ENCODE measurements at regions of chr1 and their contacts with region 1.

Region 1: DNA sequence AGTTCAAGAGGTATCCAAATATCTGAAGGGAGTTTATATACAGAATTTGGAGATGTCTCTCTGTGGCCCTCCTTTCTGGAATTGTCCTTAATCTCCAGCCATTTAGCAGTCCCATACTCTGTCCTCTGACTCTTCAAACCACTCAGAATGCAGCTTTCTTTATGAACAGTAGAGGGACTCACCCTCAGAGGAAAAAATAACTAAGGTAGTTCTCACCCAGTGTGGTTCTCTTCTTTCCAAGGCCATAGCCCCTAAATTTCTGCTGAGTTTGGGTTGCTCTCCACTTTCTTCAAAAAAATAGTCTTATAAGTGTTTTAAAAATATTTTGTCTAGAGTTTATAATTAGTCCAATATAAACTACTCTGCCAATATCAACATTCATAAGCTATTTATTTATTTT is 369.7 kb downstream of the MATN1 start:
- DNase-seq: no peak
- H3K4me3 ChIP-seq: no peak overlapping the region
- H3K27ac ChIP-seq: no peak overlapping the region
- H3K4me1 ChIP-seq: no peaks in the 10 kb centered on the region
- H3K27me3 ChIP-seq: no peaks in the 10 kb centered on the region
- CTCF ChIP-seq: peak; percentile 26 to 68

Region 2: DNA sequence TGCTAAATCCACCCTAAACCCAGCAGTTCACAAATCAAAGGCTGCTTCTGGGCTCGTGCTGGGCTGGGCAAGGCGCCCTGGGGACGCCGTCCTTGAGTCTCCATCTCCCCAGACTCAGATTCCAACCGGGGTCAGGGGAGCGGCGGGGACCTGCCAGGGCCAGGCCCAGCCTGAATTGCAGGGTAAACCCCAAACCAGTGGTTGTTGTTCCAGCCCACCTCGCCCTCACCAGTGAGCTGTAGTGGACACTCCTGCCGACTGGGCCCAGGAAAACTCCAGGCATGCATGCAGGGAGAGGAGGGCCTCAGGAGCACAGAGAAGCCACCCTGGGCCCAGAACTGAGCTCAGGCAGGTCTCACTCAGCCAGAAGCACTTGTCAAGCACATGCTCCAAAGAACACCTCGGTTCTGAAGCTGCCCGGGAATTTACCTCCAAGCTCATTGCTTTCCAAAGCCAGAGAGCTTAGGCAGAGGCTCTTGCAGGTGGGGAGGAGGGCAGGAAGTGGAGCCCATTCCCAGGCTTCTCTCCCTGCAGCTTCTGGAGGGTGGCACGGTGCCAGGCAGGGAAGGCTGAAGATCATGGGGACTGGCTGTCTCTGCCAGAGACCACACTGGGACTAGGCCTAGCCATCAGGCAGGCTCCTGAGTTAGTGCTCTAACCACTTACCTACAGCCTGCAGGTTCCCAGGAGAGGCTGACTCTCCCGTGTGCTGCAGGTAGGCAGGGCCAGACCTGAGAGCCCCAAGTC is 67.2 kb before region 1 on chr1:
- CTCF ChIA-PET with region 1: no interaction called
- dilution Hi-C with region 1: loop called (anchors 5 kb)
- in situ Hi-C with region 1: no loop called
- intact Hi-C with region 1: no loop called
- DNase-seq: no peak
- H3K4me3 ChIP-seq: no peak overlapping the region
- H3K27ac ChIP-seq: no peak overlapping the region
- H3K4me1 ChIP-seq: no peaks in the 10 kb centered on the region
- H3K27me3 ChIP-seq: no peaks in the 10 kb centered on the region
- CTCF ChIP-seq: no peak

Region 3: GRCh38 chr1:30379684-30380624 is 26.3 kb after region 1 on chr1:
- CTCF ChIA-PET with region 1: interaction called, 14 read pairs
- dilution Hi-C with region 1: no loop called
- in situ Hi-C with region 1: no loop called
- intact Hi-C with region 1: loop called (anchors 1 kb)
- DNase-seq: peak; percentile 68
- H3K4me3 ChIP-seq: no peak overlapping the region
- H3K27ac ChIP-seq: no peak overlapping the region
- H3K4me1 ChIP-seq: peaks cover 23% of the 10 kb centered on the region
- H3K27me3 ChIP-seq: no peaks in the 10 kb centered on the region
- CTCF ChIP-seq: peak; percentile 89 to 93

Region 4: DNA sequence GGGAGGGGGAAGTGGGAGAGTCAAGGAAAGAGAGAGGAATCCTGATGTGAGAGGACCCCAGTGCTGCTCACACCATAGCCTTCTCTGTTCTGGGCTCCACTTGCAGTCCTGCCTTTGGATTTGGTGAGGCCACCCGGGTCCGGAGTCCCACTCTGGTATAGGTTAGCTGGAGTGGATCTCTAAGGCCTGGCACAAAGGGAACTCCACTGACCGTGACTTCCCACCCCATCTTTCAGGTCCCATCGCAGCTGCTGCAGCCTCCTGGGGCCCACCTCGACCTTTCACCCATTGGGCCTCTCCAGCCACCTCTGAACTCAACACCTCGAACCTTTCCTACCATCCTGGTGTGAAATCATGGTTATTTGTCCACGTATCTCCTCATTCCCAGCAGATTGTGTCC is 45.4 kb after region 1 on chr1:
- CTCF ChIA-PET with region 1: no interaction called
- dilution Hi-C with region 1: loop called (anchors 5 kb)
- in situ Hi-C with region 1: no loop called
- intact Hi-C with region 1: no loop called
- DNase-seq: no peak
- H3K4me3 ChIP-seq: no peak overlapping the region
- H3K27ac ChIP-seq: no peak overlapping the region
- H3K4me1 ChIP-seq: no peaks in the 10 kb centered on the region
- H3K27me3 ChIP-seq: no peaks in the 10 kb centered on the region
- CTCF ChIP-seq: no peak

Region 5: GRCh38 chr1:30420519-30421050 is 66.9 kb after region 1 on chr1:
- CTCF ChIA-PET with region 1: no interaction called
- dilution Hi-C with region 1: no loop called
- in situ Hi-C with region 1: no loop called
- intact Hi-C with region 1: no loop called
- DNase-seq: peak; percentile 44
- H3K4me3 ChIP-seq: no peak overlapping the region
- H3K27ac ChIP-seq: no peak overlapping the region
- H3K4me1 ChIP-seq: peaks cover 9% of the 10 kb centered on the region
- H3K27me3 ChIP-seq: no peaks in the 10 kb centered on the region
- CTCF ChIP-seq: no peak

Region 6: DNA sequence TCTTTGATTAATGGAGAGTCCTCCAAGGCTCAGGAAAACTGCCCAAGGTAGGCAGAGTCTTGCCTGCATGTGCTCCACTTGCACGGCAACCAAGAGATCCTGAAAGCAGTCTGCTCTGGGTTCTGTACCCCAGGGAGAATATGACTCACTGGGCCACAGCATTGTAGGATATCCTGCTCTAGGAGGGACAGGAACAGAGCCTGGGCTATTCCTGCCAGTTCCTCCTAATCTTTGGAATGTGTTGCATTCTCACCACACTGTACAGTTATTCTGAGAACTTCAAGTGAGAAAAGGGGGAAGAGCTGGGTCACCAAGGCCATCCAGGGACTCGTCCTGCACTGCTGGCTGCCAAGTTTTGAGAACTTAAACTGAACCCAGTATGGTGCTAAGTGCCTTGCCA is 91.2 kb after region 1 on chr1:
- CTCF ChIA-PET with region 1: no interaction called
- dilution Hi-C with region 1: loop called (anchors 5 kb)
- in situ Hi-C with region 1: no loop called
- intact Hi-C with region 1: no loop called
- DNase-seq: peak; percentile 19
- H3K4me3 ChIP-seq: no peak overlapping the region
- H3K27ac ChIP-seq: no peak overlapping the region
- H3K4me1 ChIP-seq: no peaks in the 10 kb centered on the region
- H3K27me3 ChIP-seq: no peaks in the 10 kb centered on the region
- CTCF ChIP-seq: no peak

Region 7: GRCh38 chr1:30700528-30701257 is 347.1 kb after region 1 on chr1:
- CTCF ChIA-PET with region 1: no interaction called
- dilution Hi-C with region 1: no loop called
- in situ Hi-C with region 1: no loop called
- intact Hi-C with region 1: loop called (anchors 1 kb)
- DNase-seq: peak; percentile 68
- H3K4me3 ChIP-seq: no peak overlapping the region
- H3K27ac ChIP-seq: no peak overlapping the region
- H3K4me1 ChIP-seq: peaks cover 24% of the 10 kb centered on the region
- H3K27me3 ChIP-seq: no peaks in the 10 kb centered on the region
- CTCF ChIP-seq: no peak

Measured in mammary epithelial cell (primary cell).